Panc1 (cell line): ENCODE measurements at regions of chr1 and their contacts with region 1.

Region 1: GRCh38 chr1:200731654-200732332 is 6.9 kb upstream of the CAMSAP2 start:
- DNase-seq: no peak
- ATAC-seq: no peak
- H3K4me3 ChIP-seq: no peak overlapping the region
- H3K27ac ChIP-seq: no peak overlapping the region
- H3K4me1 ChIP-seq: no peaks in the 10 kb centered on the region
- H3K27me3 ChIP-seq: no peaks in the 10 kb centered on the region
- CTCF ChIP-seq: no peak

Region 2: DNA sequence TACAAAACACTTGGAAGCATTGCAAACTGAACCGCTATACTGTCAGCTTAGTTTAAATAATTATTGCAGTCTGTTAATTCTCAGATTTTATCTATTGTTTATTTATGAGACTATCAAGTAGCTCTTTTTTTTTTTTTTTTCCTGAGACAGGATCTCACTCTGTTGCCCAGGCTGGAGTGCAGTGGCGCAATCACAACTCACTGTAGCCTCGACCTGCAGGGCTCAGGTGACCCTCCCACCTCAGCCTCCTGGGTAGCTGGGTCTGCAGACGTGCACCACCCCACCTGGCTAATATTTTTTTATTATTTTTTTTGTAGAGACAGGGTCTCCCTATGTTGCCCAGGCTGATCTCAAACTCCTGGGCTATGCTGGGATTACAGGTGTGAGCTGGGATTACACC is 34.2 kb after region 1 on chr1:
- CTCF ChIA-PET with region 1: no interaction called
- POLR2A ChIA-PET with region 1: interaction called, 13 read pairs
- in situ Hi-C with region 1: no loop called
- intact Hi-C with region 1: no loop called
- DNase-seq: no peak
- ATAC-seq: no peak
- H3K4me3 ChIP-seq: no peak overlapping the region
- H3K27ac ChIP-seq: no peak overlapping the region
- H3K4me1 ChIP-seq: no peaks in the 10 kb centered on the region
- H3K27me3 ChIP-seq: no peaks in the 10 kb centered on the region
- CTCF ChIP-seq: no peak

Region 3: GRCh38 chr1:201013991-201014815 is 282.4 kb after region 1 on chr1:
- CTCF ChIA-PET with region 1: no interaction called
- POLR2A ChIA-PET with region 1: no interaction called
- in situ Hi-C with region 1: no loop called
- intact Hi-C with region 1: no loop called
- DNase-seq: no peak
- ATAC-seq: no peak
- H3K4me3 ChIP-seq: no peak overlapping the region
- H3K27ac ChIP-seq: no peak overlapping the region
- H3K4me1 ChIP-seq: no peaks in the 10 kb centered on the region
- H3K27me3 ChIP-seq: peaks cover 3% of the 10 kb centered on the region; the same call in 1 of the 2 replicates
- CTCF ChIP-seq: no peak

Region 4: DNA sequence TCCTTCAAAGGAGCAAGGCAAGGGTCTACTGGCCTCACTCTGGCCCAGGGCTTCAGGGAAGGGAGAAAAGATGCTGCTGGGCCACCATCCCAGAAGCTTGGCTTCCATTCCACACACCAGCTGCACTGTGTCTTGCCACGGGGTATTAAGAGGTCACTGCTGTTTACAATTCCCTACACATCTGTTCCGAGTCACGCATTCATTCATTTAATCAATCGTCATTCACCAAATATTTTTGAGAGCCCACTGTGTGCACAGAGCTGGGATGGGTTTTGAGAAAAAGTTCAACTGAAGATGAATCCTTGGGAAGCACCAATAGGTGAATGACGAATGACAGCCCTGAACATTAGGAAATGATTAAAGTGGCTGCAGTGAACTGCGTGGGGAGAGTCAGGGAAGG is 908.8 kb after region 1 on chr1:
- CTCF ChIA-PET with region 1: no interaction called
- POLR2A ChIA-PET with region 1: no interaction called
- in situ Hi-C with region 1: no loop called
- intact Hi-C with region 1: no loop called
- DNase-seq: no peak
- ATAC-seq: no peak
- H3K4me3 ChIP-seq: no peak overlapping the region
- H3K27ac ChIP-seq: no peak overlapping the region
- H3K4me1 ChIP-seq: no peaks in the 10 kb centered on the region
- H3K27me3 ChIP-seq: no peaks in the 10 kb centered on the region
- CTCF ChIP-seq: no peak

Region 5: DNA sequence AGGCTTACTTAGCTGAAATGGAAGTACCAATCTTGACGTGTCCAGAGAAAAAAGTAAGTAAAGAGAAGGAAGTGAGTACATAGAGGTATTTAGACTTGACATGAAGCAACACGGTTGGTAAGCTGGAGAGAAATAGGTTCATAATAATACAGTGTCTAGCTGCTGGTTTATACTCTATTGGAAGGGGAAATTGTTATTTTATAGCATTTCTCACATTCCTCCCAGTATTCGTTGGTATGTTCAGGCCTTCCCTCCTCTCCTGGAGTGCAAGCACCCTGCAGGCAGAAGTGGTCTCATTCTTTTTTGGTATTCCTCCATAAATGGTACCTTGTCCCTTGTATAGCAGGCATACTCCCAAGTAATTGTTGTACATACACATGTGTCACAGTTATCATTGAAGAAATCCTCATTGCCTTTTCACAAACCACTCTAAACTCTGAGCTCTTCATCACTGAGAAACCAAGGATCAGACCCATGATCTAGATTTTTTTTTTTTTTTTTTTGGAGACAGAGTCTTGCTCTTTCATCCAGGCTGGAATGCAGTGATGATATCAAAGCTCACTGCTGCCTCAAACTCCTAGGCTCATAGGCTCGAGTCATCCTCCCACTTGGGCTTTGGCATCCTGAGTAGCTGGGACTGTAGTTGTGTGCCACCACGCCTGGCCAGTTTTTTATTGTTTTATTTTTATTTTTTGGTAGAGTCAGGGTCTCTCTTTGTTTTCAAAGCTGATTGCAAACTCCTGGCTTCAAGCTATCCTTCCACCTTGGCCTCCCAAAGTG is 1087.4 kb after region 1 on chr1:
- CTCF ChIA-PET with region 1: no interaction called
- POLR2A ChIA-PET with region 1: no interaction called
- in situ Hi-C with region 1: no loop called
- intact Hi-C with region 1: no loop called
- DNase-seq: no peak
- ATAC-seq: no peak
- H3K4me3 ChIP-seq: no peak overlapping the region
- H3K27ac ChIP-seq: no peak overlapping the region
- H3K4me1 ChIP-seq: no peaks in the 10 kb centered on the region
- H3K27me3 ChIP-seq: no peaks in the 10 kb centered on the region
- CTCF ChIP-seq: no peak